Common myeloid progenitor, CD34-positive (primary cell): ENCODE measurements at regions of chr1 and their contacts with region 1.

Region 1: DNA sequence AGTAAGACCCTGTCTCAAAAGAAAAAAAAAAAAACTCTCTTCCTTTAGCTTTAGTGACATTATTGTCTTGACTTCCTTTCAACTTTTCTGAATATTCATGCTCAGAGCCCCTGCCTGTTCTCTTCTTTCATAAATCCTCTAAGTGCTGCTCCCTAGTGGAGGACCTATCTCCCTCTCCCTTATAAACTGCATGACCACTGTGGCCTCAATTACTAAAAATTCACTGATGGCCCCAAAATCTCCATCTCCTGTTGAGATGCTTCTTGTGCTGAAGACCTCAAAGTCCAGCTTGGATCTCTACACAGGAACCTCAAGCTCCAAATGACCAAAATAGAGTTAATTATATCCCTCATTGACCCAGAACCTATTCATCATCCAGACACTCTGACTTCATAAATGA is 7.8 kb downstream of the ITLN1 start:
- DNase-seq: peak; percentile 66 to 78 (median 76)
- H3K4me3 ChIP-seq: no peak overlapping the region
- H3K27ac ChIP-seq: no peak overlapping the region
- H3K4me1 ChIP-seq: peaks cover 0 to 11% (median 7%) of the 10 kb centered on the region in 4 experiments
- H3K27me3 ChIP-seq: no peaks in the 10 kb centered on the region

Region 2: DNA sequence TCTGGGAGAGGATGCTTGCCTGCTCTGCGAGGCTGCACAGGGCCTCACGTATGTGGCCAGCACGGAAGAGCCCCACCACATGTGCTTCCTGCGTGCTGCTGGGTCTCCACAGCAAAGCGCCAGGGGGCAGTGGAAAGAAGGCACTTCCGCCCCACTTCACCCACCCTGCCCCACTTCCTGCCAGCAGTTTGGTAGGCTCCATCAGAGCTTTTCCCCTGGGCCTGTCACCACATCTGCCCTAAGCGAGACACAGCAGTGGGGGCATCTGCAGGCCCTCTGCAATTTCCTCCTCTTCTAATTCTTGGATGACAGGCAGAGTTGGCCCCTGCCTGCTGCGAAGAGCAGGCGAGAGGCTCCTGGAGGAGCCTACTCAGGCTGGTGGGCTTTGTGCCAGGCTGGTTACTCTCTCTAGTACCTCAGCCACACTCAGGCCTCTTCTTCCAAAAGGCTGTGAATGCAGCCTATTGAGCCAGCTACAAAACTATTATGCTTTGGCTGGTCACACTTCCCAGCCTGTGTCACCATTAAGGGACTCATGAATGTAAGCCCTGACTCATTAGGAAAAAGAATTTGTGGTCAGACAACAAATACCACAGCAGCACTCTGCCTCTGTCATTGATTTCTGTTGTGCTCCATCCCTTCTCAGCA is 39.5 kb before region 1 on chr1:
- CTCF ChIA-PET with region 1: interaction called, 90 read pairs
- POLR2A ChIA-PET with region 1: no interaction called
- DNase-seq: peak; percentile 94 to 99 (median 98)
- H3K4me3 ChIP-seq: peak overlapping the region in 3 of 7 experiments; percentile 32 to 40 (median 37)
- H3K27ac ChIP-seq: peak overlapping the region; percentile 65 to 80
- H3K4me1 ChIP-seq: peaks cover 38 to 77% (median 72%) of the 10 kb centered on the region in 4 experiments
- H3K27me3 ChIP-seq: no peaks in the 10 kb centered on the region

Region 3: DNA sequence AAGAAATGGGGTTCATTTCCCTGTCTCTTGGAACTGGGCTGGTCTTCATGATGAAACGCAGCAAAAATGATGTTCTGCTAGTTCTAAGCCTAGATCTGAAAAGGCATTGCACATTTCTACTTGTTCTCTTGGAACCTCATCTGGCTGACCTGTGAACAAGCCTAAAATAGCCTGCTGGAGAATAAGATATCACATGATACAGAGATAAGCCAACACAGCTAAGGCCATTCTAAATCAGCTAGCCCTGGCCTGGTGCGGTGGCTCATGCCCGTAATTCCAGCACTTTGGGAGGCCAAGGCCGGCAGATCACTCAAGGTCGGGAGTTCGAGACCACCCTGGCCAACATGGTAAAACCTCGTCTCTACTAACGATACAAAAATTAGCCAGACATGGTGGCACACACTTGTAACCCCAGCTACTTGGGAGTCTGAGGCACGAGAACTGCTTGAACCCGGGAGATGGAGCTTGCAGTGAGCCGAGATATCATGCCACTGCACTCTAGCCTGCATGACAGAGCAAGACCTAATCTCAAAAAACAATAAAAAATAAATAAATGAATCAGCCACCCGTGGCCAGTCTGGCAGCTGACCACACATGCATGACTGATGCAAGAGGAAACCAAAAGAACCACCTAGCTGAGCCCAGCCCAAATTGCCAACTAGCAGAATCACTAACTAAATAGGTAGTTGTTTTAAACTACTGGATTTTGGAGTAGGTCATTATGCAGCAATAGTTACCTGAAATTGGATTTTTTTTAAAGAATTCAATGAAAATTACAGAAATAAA is 32.6 kb before region 1 on chr1:
- CTCF ChIA-PET with region 1: interaction called, 14 read pairs
- POLR2A ChIA-PET with region 1: no interaction called
- DNase-seq: peak; percentile 66 to 86 (median 83)
- H3K4me3 ChIP-seq: peak overlapping the region in 2 of 7 experiments; percentile 4 to 22
- H3K27ac ChIP-seq: peak overlapping the region in 1 of 2 experiments; percentile 46
- H3K4me1 ChIP-seq: peaks cover 33 to 68% (median 57%) of the 10 kb centered on the region in 4 experiments
- H3K27me3 ChIP-seq: no peaks in the 10 kb centered on the region

Region 4: GRCh38 chr1:160850993-160851392 is 26.2 kb before region 1 on chr1:
- CTCF ChIA-PET with region 1: interaction called, 14 read pairs
- POLR2A ChIA-PET with region 1: no interaction called
- DNase-seq: no peak
- H3K4me3 ChIP-seq: no peak overlapping the region
- H3K27ac ChIP-seq: no peak overlapping the region
- H3K4me1 ChIP-seq: peaks cover 10 to 44% (median 24%) of the 10 kb centered on the region in 4 experiments
- H3K27me3 ChIP-seq: no peaks in the 10 kb centered on the region

Region 5: DNA sequence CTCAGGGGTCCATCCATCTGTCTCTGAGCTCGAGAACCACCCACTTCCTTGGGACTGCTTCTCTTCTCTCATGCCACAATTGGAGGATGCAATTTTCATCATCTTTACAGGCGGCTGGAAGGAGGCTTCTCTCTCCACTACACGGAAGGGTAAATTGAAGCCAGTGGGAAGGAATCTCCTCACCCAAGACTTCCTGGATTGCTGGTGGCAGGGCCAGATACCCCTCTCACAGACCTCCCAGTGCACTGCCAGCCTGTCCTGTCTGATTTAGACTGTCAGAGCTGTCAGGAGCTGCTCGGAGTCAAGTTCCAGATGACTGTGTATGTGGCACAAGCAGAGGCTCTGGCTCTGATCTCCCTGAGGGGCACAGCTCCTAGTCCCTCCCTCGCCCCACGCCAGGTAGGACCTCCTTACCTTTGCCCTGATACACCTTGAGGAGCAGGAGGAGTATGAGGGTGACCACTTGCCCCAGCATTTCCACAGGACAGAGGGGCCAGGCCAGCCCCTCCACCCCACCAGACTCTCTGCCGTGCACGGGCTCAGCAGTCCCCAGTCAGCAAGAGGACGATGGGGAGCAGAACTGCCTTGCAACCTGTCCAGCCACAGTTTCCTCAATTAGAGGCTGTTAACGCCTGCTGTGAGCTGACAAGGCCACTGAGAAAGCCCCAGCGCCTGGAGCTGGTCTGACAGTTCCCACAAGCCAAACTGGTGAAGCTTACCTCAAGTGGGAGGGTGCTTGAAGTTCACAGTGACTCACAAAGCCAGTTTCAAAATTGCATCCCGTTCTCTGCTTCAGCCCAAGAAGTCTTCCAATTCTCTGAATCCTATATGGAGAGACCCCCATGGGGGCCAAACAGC is 14.8 kb before region 1 on chr1 and contains the start of gene CD244:
- CTCF ChIA-PET with region 1: interaction called, 26 read pairs
- POLR2A ChIA-PET with region 1: no interaction called
- DNase-seq: peak; percentile 89 to 99 (median 98)
- H3K4me3 ChIP-seq: peak within 1 kb of the TSS; percentile 19 to 74 (median 64)
- H3K27ac ChIP-seq: peak within 1 kb of the TSS; percentile 71 to 89
- H3K4me1 ChIP-seq: peaks cover 22 to 72% (median 68%) of the 10 kb centered on the region in 4 experiments
- H3K27me3 ChIP-seq: no peaks in the 10 kb centered on the region